Heart right ventricle (tissue), 16 donors: ENCODE measurements at regions of chr1 and their contacts with region 1.

Region 1: DNA sequence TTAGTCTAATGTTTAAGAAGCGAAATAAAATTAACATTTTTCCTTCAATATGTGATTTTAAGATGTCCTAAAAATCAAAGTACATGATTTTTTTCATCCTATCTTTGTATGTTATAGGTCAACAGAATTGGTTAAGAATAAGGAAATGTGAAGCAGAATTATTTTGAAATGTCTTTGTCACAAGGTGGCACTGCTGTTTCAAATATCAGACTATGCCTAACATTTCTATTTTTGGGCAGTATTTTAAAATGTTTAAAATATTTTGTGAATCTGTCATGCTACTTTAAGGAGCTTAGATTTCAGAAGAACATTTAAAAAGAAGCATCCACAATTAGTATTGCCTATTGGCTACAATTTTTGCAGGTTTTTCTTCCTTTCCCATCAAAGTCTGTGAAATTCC is 38.7 kb downstream of the AMY1C start:
- DNase-seq: no peak
- ATAC-seq: no peak
- H3K4me3 ChIP-seq: no peak overlapping the region
- H3K27ac ChIP-seq: no peak overlapping the region
- H3K4me1 ChIP-seq: no peaks in the 10 kb centered on the region
- H3K27me3 ChIP-seq: no peaks in the 10 kb centered on the region
- CTCF ChIP-seq: peak in 5 of 9 donors; percentile 13 to 43 (median 32)

Region 2: GRCh38 chr1:103230061-103230460 is 558.3 kb before region 1 on chr1:
- intact Hi-C with region 1: no loop called
- DNase-seq: no peak
- ATAC-seq: no peak
- H3K4me3 ChIP-seq: no peak overlapping the region
- H3K27ac ChIP-seq: no peak overlapping the region
- H3K4me1 ChIP-seq: no peaks in the 10 kb centered on the region
- H3K27me3 ChIP-seq: no peaks in the 10 kb centered on the region
- CTCF ChIP-seq: no peak

Region 3: GRCh38 chr1:103911450-103911849 is 123.1 kb after region 1 on chr1:
- intact Hi-C with region 1: no loop called
- DNase-seq: no peak
- ATAC-seq: no peak
- H3K4me3 ChIP-seq: no peak overlapping the region
- H3K27ac ChIP-seq: no peak overlapping the region
- H3K4me1 ChIP-seq: no peaks in the 10 kb centered on the region
- H3K27me3 ChIP-seq: no peaks in the 10 kb centered on the region
- CTCF ChIP-seq: no peak

Region 4: GRCh38 chr1:104018922-104019674 is 230.7 kb after region 1 on chr1:
- intact Hi-C with region 1: no loop called
- DNase-seq: no peak
- ATAC-seq: no peak
- H3K4me3 ChIP-seq: no peak overlapping the region
- H3K27ac ChIP-seq: no peak overlapping the region
- H3K4me1 ChIP-seq: no peaks in the 10 kb centered on the region
- H3K27me3 ChIP-seq: no peaks in the 10 kb centered on the region
- CTCF ChIP-seq: no peak

Region 5: DNA sequence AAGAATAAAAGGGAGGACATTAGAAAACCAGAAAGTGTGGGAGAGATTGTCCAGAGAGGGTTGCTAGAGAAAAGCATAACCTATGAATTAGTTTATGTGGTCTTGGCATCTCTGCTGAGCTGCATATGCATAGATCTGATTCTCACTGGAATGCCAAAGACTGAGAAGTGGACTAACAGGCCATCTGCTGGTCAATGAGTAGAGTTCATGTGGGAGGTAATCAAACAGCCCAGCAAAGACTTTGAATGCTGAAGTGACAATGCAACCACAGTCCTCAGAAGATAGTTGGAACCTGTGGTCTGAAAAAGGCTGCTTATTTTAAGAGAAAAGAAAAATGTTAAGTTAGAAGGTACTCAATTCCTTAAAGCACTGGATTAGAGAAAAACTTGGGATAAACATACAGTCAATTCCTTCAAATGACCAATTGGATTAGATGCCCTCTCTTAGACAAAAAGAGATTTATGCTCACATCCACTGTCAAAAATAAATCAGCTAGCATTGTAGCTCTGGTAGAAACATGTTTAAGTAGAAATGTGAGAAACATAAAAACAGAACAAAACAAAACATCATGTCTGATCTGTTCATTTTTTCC is 344.1 kb after region 1 on chr1:
- intact Hi-C with region 1: loop called in 3 of 10 experiments (anchors 5 kb)
- DNase-seq: no peak
- ATAC-seq: peak in 1 of 8 donors; percentile 50
- H3K4me3 ChIP-seq: no peak overlapping the region
- H3K27ac ChIP-seq: no peak overlapping the region
- H3K4me1 ChIP-seq: no peaks in the 10 kb centered on the region
- H3K27me3 ChIP-seq: no peaks in the 10 kb centered on the region
- CTCF ChIP-seq: peak in 6 of 9 donors; percentile 22 to 41 (median 28)